ENCODE measurements at regions of chrX and their contacts with region 1.

Region 1: DNA sequence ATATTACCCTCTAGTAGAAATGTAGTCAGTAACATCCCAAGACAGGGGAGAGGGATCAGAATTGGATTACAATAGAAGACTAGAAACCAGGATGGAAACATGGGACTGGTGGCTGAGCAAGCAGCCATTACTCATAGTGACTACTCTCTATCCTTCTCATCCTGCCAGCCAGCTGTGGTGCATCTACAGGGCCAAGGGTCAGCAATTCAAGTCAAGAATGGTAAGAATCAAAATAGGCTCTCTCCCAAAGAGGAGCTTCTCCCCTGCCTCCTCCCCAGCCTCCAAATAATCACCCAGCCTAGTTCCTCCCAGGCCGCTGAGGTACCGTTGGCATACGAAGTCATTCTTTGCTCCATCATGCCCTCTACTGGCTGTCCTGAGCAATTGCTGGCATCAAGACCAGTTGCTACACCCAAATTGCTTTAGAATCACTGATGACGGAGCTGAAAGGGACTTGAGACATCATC is 19.4 kb downstream of the AWAT2 start:
- DNase-seq: peak; percentile 21
- ATAC-seq: peak; percentile 71
- H3K4me3 Mint-ChIP-seq: no peak overlapping the region
- H3K27ac Mint-ChIP-seq: no peak overlapping the region
- H3K4me1 Mint-ChIP-seq: peaks cover 8% of the 10 kb centered on the region
- H3K27me3 Mint-ChIP-seq: no peaks in the 10 kb centered on the region
- CTCF ChIP-seq: peak; percentile 59

Region 2: DNA sequence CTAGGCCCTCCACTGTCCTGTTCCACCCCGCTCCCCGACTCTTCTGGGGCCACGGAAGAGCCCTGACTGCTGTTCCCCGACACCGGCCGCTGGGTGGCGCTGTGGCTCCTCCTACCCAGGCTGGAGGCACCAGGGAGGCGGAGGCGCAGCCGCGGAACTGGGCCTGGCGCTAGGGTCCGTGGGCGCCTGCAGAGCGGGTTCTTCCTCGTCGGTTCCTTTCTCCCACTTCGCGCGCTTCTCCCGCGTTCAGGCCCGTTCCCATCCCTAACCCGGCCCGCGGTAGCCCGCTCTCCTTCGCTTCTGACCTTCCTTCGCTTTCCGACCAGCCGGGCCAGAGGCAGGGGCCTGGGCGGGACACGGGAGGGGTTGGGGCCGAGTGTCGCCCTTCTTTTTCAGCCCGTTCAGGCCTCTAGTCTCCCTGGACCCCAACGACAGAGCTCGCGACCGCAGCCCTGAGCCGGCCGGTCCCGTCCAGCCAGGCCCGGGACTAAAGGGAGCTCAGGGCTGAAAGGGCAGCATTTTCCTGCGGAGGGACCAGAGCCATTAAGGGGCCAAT is 491.9 kb before region 1 on chrX:
- CTCF ChIA-PET with region 1: interaction called, 8 read pairs
- POLR2A ChIA-PET with region 1: no interaction called
- intact Hi-C with region 1: loop called (anchors 5 kb)
- DNase-seq: peak; percentile 71
- ATAC-seq: peak; percentile 92
- H3K4me3 Mint-ChIP-seq: peak overlapping the region; percentile 27
- H3K27ac Mint-ChIP-seq: no peak overlapping the region
- H3K4me1 Mint-ChIP-seq: peaks cover 9% of the 10 kb centered on the region
- H3K27me3 Mint-ChIP-seq: peaks cover 16% of the 10 kb centered on the region
- CTCF ChIP-seq: peak; percentile 53

Region 3: GRCh38 chrX:69988955-69989394 is 41.4 kb before region 1 on chrX:
- CTCF ChIA-PET with region 1: no interaction called
- POLR2A ChIA-PET with region 1: no interaction called
- intact Hi-C with region 1: no loop called
- DNase-seq: peak; percentile 45
- ATAC-seq: peak; percentile 72
- H3K4me3 Mint-ChIP-seq: no peak overlapping the region
- H3K27ac Mint-ChIP-seq: no peak overlapping the region
- H3K4me1 Mint-ChIP-seq: no peaks in the 10 kb centered on the region
- H3K27me3 Mint-ChIP-seq: no peaks in the 10 kb centered on the region
- CTCF ChIP-seq: no peak

Region 4: DNA sequence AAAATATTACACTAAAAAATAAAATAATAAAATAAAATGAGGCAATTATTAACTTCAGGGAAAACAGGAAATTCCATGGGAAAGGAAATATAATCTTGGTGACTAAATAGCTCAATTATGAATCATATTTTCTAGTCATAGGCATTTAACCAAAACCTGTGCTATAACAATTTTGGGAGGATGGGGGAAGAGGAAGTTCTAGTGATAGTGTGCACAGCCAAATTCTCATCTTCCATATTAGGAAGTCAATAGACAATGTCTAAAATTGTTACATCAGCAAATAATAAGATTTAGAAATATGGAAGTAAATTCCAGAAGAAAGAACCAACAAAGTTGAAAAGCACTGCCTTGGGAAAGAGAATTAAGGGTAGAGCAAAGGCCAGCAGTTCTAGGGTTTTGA is 16.6 kb after region 1 on chrX:
- CTCF ChIA-PET with region 1: no interaction called
- POLR2A ChIA-PET with region 1: no interaction called
- intact Hi-C with region 1: no loop called
- DNase-seq: no peak
- ATAC-seq: no peak
- H3K4me3 Mint-ChIP-seq: no peak overlapping the region
- H3K27ac Mint-ChIP-seq: no peak overlapping the region
- H3K4me1 Mint-ChIP-seq: no peaks in the 10 kb centered on the region
- H3K27me3 Mint-ChIP-seq: peaks cover 6% of the 10 kb centered on the region
- CTCF ChIP-seq: no peak

Measured in activated CD8-positive, alpha-beta T cell treated with anti-CD3 and anti-CD28 coated beads for 36 hours (primary cell).